Breast epithelium (tissue), 4 donors: ENCODE measurements at regions of chr6 and their contacts with region 1.

Region 1: DNA sequence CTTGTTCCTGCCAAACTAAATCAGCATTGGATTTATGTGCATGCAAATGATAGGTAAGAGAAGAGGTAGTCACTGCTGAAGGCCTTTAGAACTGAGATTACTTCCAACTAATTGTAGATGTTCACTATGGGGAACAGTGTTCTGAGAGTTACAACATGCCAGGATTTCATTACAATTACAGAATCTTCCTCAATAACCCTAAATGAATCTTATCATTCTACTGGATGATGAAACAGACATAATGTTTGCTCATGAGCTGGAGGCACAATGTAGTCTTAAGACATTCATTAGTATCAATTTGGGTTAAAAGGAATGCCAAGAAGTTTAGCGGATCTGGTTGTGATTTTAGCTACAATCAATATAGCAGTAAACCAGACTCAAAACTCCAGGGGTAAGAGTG is 248.9 kb upstream of the THEMIS start:
- DNase-seq: no peak
- H3K4me3 ChIP-seq: no peak overlapping the region
- H3K27ac ChIP-seq: no peak overlapping the region
- H3K4me1 ChIP-seq: no peaks in the 10 kb centered on the region
- H3K27me3 ChIP-seq: no peaks in the 10 kb centered on the region
- CTCF ChIP-seq: no peak
- POLR2A ChIP-seq: no peak

Region 2: GRCh38 chr6:127854009-127854408 is 295.8 kb before region 1 on chr6:
- intact Hi-C with region 1: loop called (anchors 5 kb)
- DNase-seq: no peak
- H3K4me3 ChIP-seq: no peak overlapping the region
- H3K27ac ChIP-seq: no peak overlapping the region
- H3K4me1 ChIP-seq: no peaks in the 10 kb centered on the region
- H3K27me3 ChIP-seq: no peaks in the 10 kb centered on the region
- CTCF ChIP-seq: no peak
- POLR2A ChIP-seq: no peak

Region 3: DNA sequence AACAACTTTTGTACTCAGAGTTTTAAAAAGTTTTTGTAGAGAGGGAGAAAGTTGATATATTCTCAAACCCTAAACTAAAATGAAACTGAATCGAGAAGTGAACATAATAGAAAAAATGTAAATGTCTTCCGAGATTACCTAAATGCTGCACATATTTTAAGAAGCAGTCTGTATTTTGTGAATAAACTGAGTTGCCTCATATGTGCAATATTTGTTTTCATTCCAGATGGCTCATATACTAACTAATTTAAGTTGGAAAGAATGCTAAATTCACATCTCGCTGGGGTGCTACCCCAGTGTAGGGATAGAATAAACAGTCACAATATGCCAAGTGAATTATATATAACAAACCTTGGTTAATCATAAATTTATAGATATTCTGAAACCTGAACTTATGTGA is 36.9 kb after region 1 on chr6:
- intact Hi-C with region 1: no loop called
- DNase-seq: no peak
- H3K4me3 ChIP-seq: no peak overlapping the region
- H3K27ac ChIP-seq: no peak overlapping the region
- H3K4me1 ChIP-seq: no peaks in the 10 kb centered on the region
- H3K27me3 ChIP-seq: no peaks in the 10 kb centered on the region
- CTCF ChIP-seq: no peak
- POLR2A ChIP-seq: no peak